ENCODE measurements at regions of chr16 and their contacts with region 1.

Region 1: GRCh38 chr16:29900102-29900887 is at the start of gene ASPHD1:
- DNase-seq: peak; percentile 86
- ATAC-seq: peak; percentile 72
- H3K4me3 ChIP-seq: peak within 1 kb of the TSS; percentile 84 to 99 (median 86)
- H3K27ac ChIP-seq: peak within 1 kb of the TSS; percentile 71
- H3K4me1 ChIP-seq: peaks cover 45% of the 10 kb centered on the region
- H3K27me3 ChIP-seq: no peaks in the 10 kb centered on the region; a peak in 1 of 5 replicates
- CTCF ChIP-seq: no peak; the same call in 1 of the 2 replicates
- EP300 ChIP-seq: 0 out of 4 replicates have a peak, but pooled peaks of 1 of the 2 experiments have one; percentile 8
- POLR2A ChIP-seq: peak in 1 of 2 experiments; percentile 59; a peak in 2 of 4 replicates
- RAD21 ChIP-seq: peak; percentile 47; the same call in 1 of the 2 replicates
- total RNA-seq, gene ASPHD1: 15.6 and 19.7 TPM in 2 replicates

Region 2: GRCh38 chr16:29815793-29816693 is 84.3 kb before region 1 on chr16 and contains the start of gene PAGR1:
- CTCF ChIA-PET with region 1: no interaction called
- POLR2A ChIA-PET with region 1: interaction called, 26 read pairs
- in situ Hi-C with region 1: no loop called
- intact Hi-C with region 1: no loop called
- DNase-seq: peak; percentile 99
- ATAC-seq: peak; percentile 63
- H3K4me3 ChIP-seq: peak within 1 kb of the TSS; percentile 86 to 93 (median 88)
- H3K27ac ChIP-seq: peak within 1 kb of the TSS; percentile 83
- H3K4me1 ChIP-seq: peaks cover 80% of the 10 kb centered on the region
- H3K27me3 ChIP-seq: peaks cover 0 to 12% of the 10 kb centered on the region in 2 experiments; a peak in 2 of 5 replicates
- CTCF ChIP-seq: peak; percentile 99
- EP300 ChIP-seq: peak in 1 of 2 experiments; percentile 75; a peak in 2 of 4 replicates
- POLR2A ChIP-seq: peak in 1 of 2 experiments; percentile 85; a peak in 2 of 4 replicates
- RAD21 ChIP-seq: peak; percentile 96
- total RNA-seq, gene PAGR1: 66.4 and 74.5 TPM in 2 replicates

Region 3: GRCh38 chr16:29862884-29863668 is 37.2 kb before region 1 on chr16 and contains the start of gene CDIPT:
- CTCF ChIA-PET with region 1: no interaction called
- POLR2A ChIA-PET with region 1: interaction called, 29 read pairs
- in situ Hi-C with region 1: no loop called
- intact Hi-C with region 1: loop called (anchors 2 kb)
- DNase-seq: peak; percentile 97
- ATAC-seq: peak; percentile 94
- H3K4me3 ChIP-seq: peak within 1 kb of the TSS; percentile 85 to 95 (median 88)
- H3K27ac ChIP-seq: peak within 1 kb of the TSS; percentile 97
- H3K4me1 ChIP-seq: peaks cover 37% of the 10 kb centered on the region
- H3K27me3 ChIP-seq: no peaks in the 10 kb centered on the region; a peak in 1 of 5 replicates
- CTCF ChIP-seq: peak; percentile 95
- EP300 ChIP-seq: peak in 1 of 2 experiments; percentile 50; a peak in 3 of 4 replicates
- POLR2A ChIP-seq: peak; percentile 42 to 64
- RAD21 ChIP-seq: peak; percentile 65; the same call in 1 of the 2 replicates
- total RNA-seq, gene CDIPT: 39.2 and 54.9 TPM in 2 replicates

Region 4: GRCh38 chr16:29915590-29916247 is 15.4 kb after region 1 on chr16:
- CTCF ChIA-PET with region 1: no interaction called
- POLR2A ChIA-PET with region 1: interaction called, 49 read pairs
- in situ Hi-C with region 1: no loop called
- intact Hi-C with region 1: no loop called
- DNase-seq: peak; percentile 63
- ATAC-seq: no peak
- H3K4me3 ChIP-seq: no peak overlapping the region
- H3K27ac ChIP-seq: peak overlapping the region; percentile 55
- H3K4me1 ChIP-seq: peaks cover 14% of the 10 kb centered on the region
- H3K27me3 ChIP-seq: no peaks in the 10 kb centered on the region
- CTCF ChIP-seq: no peak
- EP300 ChIP-seq: no peak
- POLR2A ChIP-seq: no peak
- RAD21 ChIP-seq: no peak

Region 5: GRCh38 chr16:29943846-29944669 is 43.8 kb after region 1 on chr16:
- CTCF ChIA-PET with region 1: no interaction called
- POLR2A ChIA-PET with region 1: interaction called, 14 read pairs
- in situ Hi-C with region 1: no loop called
- intact Hi-C with region 1: no loop called
- DNase-seq: peak; percentile 91
- ATAC-seq: peak; percentile 97
- H3K4me3 ChIP-seq: peak overlapping the region; percentile 39 to 51 (median 41)
- H3K27ac ChIP-seq: peak overlapping the region; percentile 62
- H3K4me1 ChIP-seq: peaks cover 38% of the 10 kb centered on the region
- H3K27me3 ChIP-seq: no peaks in the 10 kb centered on the region
- CTCF ChIP-seq: peak; percentile 41; the same call in 1 of the 2 replicates
- EP300 ChIP-seq: peak in 1 of 2 experiments; percentile 29; a peak in 2 of 4 replicates
- POLR2A ChIP-seq: peak; percentile 22 to 50; a peak in 2 of 4 replicates
- RAD21 ChIP-seq: no peak

Region 6: GRCh38 chr16:29973384-29974246 is 73.3 kb after region 1 on chr16 and contains the start of gene TAOK2:
- CTCF ChIA-PET with region 1: no interaction called
- POLR2A ChIA-PET with region 1: interaction called, 42 read pairs
- in situ Hi-C with region 1: no loop called
- intact Hi-C with region 1: no loop called
- DNase-seq: peak; percentile 98
- ATAC-seq: peak; percentile 95
- H3K4me3 ChIP-seq: peak within 1 kb of the TSS; percentile 86 to 99 (median 91)
- H3K27ac ChIP-seq: peak within 1 kb of the TSS; percentile 72
- H3K4me1 ChIP-seq: peaks cover 30% of the 10 kb centered on the region
- H3K27me3 ChIP-seq: no peaks in the 10 kb centered on the region; a peak in 1 of 5 replicates
- CTCF ChIP-seq: peak; percentile 11; the same call in 1 of the 2 replicates
- EP300 ChIP-seq: peak in 1 of 2 experiments; percentile 65; a peak in 2 of 4 replicates
- POLR2A ChIP-seq: peak; percentile 72 to 89
- RAD21 ChIP-seq: peak; percentile 5
- total RNA-seq, gene TAOK2: 27.6 and 43.2 TPM in 2 replicates

Measured in HepG2 (cell line).